ENCODE measurements at regions of chr6 and their contacts with region 1.

Region 1: DNA sequence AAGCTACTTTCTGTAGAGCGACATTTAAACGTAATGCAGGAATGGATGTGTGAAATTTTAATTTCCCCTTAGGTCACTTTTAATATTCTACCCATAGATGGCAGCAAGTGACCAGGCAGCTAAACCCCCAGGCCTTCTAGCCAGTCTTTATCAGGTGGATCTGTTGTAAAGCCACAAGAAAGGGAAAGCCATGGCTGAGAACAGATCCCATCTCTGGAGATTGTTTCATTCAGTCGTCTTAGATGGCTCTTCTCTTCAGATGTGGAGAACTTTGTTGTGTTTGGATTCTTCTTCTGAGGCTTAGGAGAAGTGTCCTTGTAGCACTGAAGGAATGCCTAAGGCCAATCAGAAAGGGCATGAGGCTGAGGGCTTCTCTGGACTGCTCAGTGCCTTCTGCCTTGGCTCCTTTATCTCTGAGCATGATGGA is 15.8 kb upstream of the RNF182 start:
- DNase-seq: peak; percentile 64
- CTCF ChIP-seq: peak; percentile 62

Region 2: DNA sequence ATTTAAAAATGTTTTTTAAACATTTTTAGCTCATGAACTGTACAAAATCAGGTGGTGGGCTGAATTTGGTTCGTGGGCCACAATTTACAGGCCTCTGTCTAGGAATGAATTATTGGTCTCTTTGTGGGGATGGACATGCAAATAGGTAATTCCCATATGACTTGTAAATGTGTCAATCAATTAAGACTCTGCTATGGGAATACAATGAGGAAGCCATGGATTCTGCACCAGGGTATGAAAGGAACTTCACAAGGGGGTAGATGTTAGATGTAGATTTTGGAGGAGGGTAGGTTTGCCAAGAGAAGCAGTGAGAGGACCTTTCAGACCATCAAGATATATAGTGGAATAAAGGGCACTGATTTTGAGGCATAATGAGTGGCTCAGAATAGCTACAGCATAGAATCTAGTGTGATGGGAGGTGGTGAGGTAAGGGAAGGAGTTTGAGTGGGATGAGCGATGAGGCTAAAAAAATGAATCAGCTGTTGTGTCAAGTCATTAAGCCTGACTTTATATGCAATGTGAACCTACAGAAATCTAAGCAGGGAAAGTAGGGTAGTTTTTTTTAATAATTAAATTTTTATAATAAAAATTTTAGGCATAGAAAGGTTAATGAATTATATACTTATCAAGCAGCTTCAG is 16.8 kb before region 1 on chr6:
- CTCF ChIA-PET with region 1: interaction called, 11 read pairs
- POLR2A ChIA-PET with region 1: no interaction called
- DNase-seq: no peak
- CTCF ChIP-seq: no peak

Region 3: DNA sequence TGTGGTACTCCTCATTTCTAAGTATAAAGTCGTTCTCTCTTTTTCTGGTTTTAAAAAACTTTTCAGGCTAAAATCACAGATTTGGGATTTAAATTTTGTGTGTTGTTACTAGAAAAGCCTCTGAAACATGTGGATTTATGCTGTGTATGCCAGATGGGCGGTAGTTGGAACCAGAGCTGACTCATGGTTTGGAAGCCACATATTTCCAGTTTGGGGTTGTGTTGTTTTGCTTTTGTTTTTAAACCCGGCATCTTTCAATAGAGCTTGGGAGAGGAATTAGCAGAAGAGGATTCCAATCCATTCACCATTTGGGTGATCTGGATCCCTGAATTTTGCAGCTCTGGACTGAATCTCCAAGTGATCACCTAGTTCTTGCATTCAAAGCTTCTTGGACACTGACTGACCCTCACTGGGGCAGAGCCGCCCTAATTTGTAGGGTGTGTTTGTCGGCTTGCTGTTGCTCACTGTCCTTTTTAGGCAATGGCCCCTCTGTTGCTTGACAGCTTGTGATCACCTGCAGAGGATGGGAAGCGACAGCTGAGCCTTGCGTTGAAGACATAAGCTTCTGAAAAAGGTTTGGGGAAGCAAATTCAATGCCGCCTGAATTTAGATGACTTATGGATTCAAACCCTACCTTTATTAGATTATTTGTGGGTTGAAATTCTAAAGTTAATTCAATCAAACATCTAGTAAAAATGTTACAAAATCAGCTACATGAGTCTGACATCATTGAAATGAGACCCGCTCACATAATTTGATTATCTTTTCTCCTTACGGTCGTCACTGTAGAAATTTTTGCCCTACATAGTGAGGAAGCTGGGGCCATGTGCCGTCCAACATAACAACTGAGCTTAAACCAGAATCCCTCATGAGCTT is 128.7 kb after region 1 on chr6:
- CTCF ChIA-PET with region 1: interaction called, 17 read pairs
- POLR2A ChIA-PET with region 1: no interaction called
- DNase-seq: no peak
- CTCF ChIP-seq: no peak

Region 4: DNA sequence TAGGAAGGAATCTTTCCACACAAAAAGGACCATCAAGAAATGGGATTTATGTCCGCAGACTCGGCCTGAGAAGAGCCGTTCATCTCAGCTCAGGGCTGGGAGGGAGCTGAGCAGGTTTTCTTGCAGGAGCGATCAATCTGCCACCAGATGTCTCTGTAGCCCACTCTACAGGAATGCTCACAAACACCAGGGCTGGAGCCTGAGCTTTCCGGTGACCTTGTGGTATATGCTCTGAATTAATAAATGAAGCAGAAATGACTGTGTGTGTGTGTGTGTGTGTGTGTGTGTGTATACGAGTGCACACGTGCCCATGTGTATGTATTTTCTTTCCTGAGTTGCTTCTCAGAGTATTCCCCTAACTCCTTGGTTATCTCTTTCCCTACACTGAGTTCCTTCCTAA is 220.6 kb after region 1 on chr6:
- CTCF ChIA-PET with region 1: interaction called, 10 read pairs
- POLR2A ChIA-PET with region 1: no interaction called
- DNase-seq: peak; percentile 51
- CTCF ChIP-seq: peak; percentile 43

Region 5: GRCh38 chr6:14550822-14551221 is 641.9 kb after region 1 on chr6:
- CTCF ChIA-PET with region 1: no interaction called
- POLR2A ChIA-PET with region 1: no interaction called
- DNase-seq: no peak
- CTCF ChIP-seq: no peak